Aorta (tissue), 5 donors: ENCODE measurements at regions of chr14 and their contacts with region 1.

Region 1: DNA sequence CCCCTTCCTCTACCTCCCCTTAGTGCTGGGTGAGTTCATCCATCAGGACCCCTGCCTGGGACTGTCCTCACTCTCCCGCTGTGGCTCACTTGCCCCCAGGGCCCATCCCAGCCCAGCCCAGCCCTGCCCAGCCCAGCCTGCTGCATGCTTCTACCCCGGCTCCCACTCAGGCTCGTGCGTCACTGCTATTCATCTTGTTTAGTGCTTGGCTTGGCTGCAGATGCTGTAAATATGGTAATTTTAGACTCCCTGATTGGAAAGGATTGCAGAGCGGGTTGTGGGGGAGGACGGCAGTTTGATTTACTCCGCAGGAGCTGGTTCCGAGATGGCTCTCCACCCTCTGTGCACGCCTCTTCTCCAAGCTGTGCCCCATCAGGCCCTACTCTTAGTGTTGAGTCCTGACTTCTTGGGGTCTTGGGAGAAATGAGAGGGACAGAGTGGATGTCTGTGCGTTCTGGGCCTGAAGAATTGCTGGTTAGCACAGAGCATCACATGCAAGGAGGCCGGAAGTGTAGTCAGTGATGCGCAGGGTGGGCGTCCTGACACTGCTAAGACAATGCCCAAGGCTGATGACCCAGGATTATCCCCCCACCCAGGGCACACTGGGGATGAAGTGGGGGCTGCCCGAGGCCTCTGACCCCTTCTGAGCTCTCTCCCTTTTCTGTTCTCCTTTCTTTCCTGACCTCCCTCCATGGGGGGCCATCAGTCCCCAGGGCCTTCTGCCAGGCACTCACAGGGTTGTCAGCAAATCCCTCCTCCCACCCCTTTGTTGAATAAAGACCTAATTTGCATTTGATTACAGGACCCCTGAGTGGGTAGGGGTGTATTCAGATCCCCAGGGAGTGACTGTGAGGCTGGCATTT is 244.4 kb downstream of the ZFP36L1 start:
- DNase-seq: peak; percentile 91 to 95
- ATAC-seq: peak; percentile 91
- H3K4me3 ChIP-seq: no peak overlapping the region
- H3K27ac ChIP-seq: peak overlapping the region; percentile 95 to 96
- H3K4me1 ChIP-seq: peaks cover 4 to 15% of the 10 kb centered on the region in 2 donors
- H3K27me3 ChIP-seq: no peaks in the 10 kb centered on the region

Region 2: GRCh38 chr14:67943947-67944346 is 604.5 kb before region 1 on chr14:
- intact Hi-C with region 1: loop called in 1 of 2 experiments (anchors 10 kb)
- DNase-seq: peak in 1 of 2 donors; percentile 67
- ATAC-seq: peak; percentile 85
- H3K4me3 ChIP-seq: no peak overlapping the region
- H3K27ac ChIP-seq: no peak overlapping the region
- H3K4me1 ChIP-seq: peaks cover 10% of the 10 kb centered on the region in 2 donors
- H3K27me3 ChIP-seq: no peaks in the 10 kb centered on the region

Region 3: GRCh38 chr14:68392393-68393141 is 155.9 kb before region 1 on chr14:
- intact Hi-C with region 1: loop called (anchors 5 kb)
- DNase-seq: peak in 1 of 2 donors; percentile 87
- ATAC-seq: peak; percentile 37
- H3K4me3 ChIP-seq: no peak overlapping the region
- H3K27ac ChIP-seq: peak overlapping the region; percentile 85 to 94
- H3K4me1 ChIP-seq: peaks cover 7 to 10% of the 10 kb centered on the region in 2 donors
- H3K27me3 ChIP-seq: no peaks in the 10 kb centered on the region

Region 4: GRCh38 chr14:68506021-68506644 is 42.3 kb before region 1 on chr14:
- intact Hi-C with region 1: no loop called
- DNase-seq: no peak
- ATAC-seq: no peak
- H3K4me3 ChIP-seq: no peak overlapping the region
- H3K27ac ChIP-seq: peak overlapping the region in 1 of 2 donors; percentile 26
- H3K4me1 ChIP-seq: peaks cover 0 to 4% of the 10 kb centered on the region in 2 donors
- H3K27me3 ChIP-seq: no peaks in the 10 kb centered on the region

Region 5: DNA sequence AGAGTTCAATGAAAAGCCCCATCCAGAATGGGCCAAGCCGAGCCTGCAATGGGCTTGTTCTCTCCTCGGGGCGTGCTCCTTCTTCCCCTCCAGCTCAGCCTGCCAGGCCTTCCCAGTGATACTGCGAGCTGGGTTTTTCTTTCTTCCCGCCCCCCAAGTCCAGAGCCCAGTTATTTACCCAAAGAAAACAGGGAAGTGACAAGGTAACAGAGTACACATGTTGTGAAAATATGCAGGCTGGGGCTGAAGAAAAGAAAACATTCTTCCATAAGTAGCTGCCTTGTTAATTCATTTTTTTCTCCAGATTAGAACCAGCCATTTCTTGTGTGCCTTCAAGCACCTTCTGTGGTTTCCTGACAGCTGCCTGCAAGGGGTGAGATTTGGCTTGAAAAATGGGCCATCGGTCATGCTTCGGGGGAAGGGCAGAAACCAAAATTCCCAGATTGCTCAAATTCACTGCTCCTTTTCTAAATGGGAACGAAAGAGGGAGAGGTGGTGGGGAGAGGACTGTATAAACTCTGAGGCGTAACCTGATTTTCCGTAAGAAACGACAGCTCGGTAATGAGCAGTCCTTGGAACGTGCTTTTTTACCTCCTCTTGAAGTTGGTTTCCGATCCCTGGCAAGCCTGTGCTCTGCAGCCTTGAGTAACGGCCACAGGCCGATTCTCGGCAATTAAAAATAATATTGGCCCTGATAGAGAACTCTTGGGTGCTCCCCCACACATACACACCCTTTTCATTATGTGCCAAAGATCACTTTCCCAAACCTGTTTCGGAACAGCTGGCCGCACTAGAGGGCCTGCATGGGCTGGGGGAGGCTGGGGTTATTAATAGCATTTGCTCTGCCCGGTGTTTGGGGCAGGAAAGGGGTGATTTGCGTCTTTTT is 15.1 kb after region 1 on chr14:
- intact Hi-C with region 1: loop called in 1 of 2 experiments (anchors 1 kb)
- DNase-seq: no peak
- ATAC-seq: peak; percentile 64
- H3K4me3 ChIP-seq: no peak overlapping the region
- H3K27ac ChIP-seq: peak overlapping the region; percentile 91 to 99
- H3K4me1 ChIP-seq: peaks cover 0 to 6% of the 10 kb centered on the region in 2 donors
- H3K27me3 ChIP-seq: no peaks in the 10 kb centered on the region

Region 6: GRCh38 chr14:68627880-68628607 is 79.6 kb after region 1 on chr14:
- intact Hi-C with region 1: loop called (anchors 2 to 5 kb)
- DNase-seq: peak; percentile 63 to 74
- ATAC-seq: no peak
- H3K4me3 ChIP-seq: no peak overlapping the region
- H3K27ac ChIP-seq: no peak overlapping the region
- H3K4me1 ChIP-seq: peaks cover 0 to 3% of the 10 kb centered on the region in 2 donors
- H3K27me3 ChIP-seq: no peaks in the 10 kb centered on the region

Region 7: GRCh38 chr14:68692916-68693771 is 144.7 kb after region 1 on chr14:
- intact Hi-C with region 1: loop called in 1 of 2 experiments (anchors 5 kb)
- DNase-seq: peak in 1 of 2 donors; percentile 36
- ATAC-seq: peak; percentile 54
- H3K4me3 ChIP-seq: no peak overlapping the region
- H3K27ac ChIP-seq: no peak overlapping the region
- H3K4me1 ChIP-seq: no peaks in the 10 kb centered on the region
- H3K27me3 ChIP-seq: no peaks in the 10 kb centered on the region